Caco-2 (cell line): ENCODE measurements at regions of chr22 and their contacts with region 1.

Region 1: DNA sequence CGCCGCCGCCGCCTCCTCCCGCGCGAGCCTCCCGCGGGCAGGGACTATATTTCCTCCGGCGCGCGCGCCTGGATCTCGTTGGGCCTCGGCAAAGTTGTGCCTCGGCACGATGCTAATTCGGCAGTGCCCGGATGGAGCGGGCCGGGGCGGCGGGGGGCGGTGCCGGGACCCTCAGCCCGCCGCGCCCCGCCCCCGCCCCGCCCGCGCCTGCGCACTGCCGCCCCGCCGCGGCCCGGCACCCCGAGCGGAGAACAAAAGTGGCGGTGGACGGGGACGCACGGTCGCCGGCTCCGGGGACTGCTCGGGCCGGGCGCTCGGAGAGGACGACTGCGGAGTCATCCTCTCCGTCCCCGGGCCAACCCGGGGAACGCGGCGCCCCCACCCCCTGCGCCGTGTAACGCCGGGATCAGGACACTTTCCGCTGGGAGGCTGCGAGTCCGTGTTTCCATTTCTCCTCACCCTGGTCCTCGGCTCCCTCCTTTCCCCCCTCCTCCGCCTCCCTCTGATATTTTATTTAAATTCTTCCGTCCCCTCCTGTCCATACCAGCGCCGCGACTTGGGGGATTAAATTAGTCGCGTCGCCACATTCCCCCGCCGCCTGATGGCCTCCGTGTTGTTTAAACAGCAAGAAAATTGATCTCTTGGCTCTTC is at the start of gene PHF21B:
- DNase-seq: peak in 1 of 2 experiments; percentile 60
- H3K4me3 ChIP-seq: peak within 1 kb of the TSS; percentile 53
- H3K4me3 Mint-ChIP-seq: peak within 1 kb of the TSS; percentile 76
- H3K27ac Mint-ChIP-seq: no peak within 1 kb of the TSS
- H3K4me1 ChIP-seq: peaks cover 4% of the 10 kb centered on the region
- H3K4me1 Mint-ChIP-seq: peaks cover 8% of the 10 kb centered on the region
- H3K27me3 ChIP-seq: peaks cover 1% of the 10 kb centered on the region; the same call in 1 of the 2 replicates
- H3K27me3 Mint-ChIP-seq: peaks cover 37% of the 10 kb centered on the region
- CTCF ChIP-seq: no peak
- total RNA-seq, gene PHF21B: 0.98 TPM in 1 of 2 replicates, not detected in the other

Region 2: GRCh38 chr22:45064313-45065278 is 54.6 kb after region 1 on chr22:
- CTCF ChIA-PET with region 1: no interaction called
- POLR2A ChIA-PET with region 1: interaction called, 12 read pairs
- intact Hi-C with region 1: no loop called
- DNase-seq: no peak
- H3K4me3 ChIP-seq: no peak overlapping the region
- H3K4me3 Mint-ChIP-seq: no peak overlapping the region
- H3K27ac Mint-ChIP-seq: no peak overlapping the region
- H3K4me1 ChIP-seq: no peaks in the 10 kb centered on the region
- H3K4me1 Mint-ChIP-seq: no peaks in the 10 kb centered on the region
- H3K27me3 ChIP-seq: no peaks in the 10 kb centered on the region
- H3K27me3 Mint-ChIP-seq: no peaks in the 10 kb centered on the region
- CTCF ChIP-seq: no peak